ENCODE measurements at regions of chr12 and their contacts with region 1.

Region 1: GRCh38 chr12:51217968-51218606 is at the start of gene POU6F1:
- DNase-seq: peak; percentile 44 to 84 (median 64)
- ATAC-seq: peak; percentile 84 to 87 (median 85)
- H3K4me3 ChIP-seq: peak within 1 kb of the TSS; percentile 88 to 90
- H3K4me3 Mint-ChIP-seq: peak within 1 kb of the TSS; percentile 90 to 92 (median 91)
- H3K27ac ChIP-seq: peak within 1 kb of the TSS; percentile 91
- H3K27ac Mint-ChIP-seq: peak within 1 kb of the TSS; percentile 96 to 97
- H3K4me1 ChIP-seq: peaks cover 5 to 18% of the 10 kb centered on the region in 2 experiments
- H3K4me1 Mint-ChIP-seq: peaks cover 26 to 31% (median 28%) of the 10 kb centered on the region in 3 donors
- H3K27me3 ChIP-seq: no peaks in the 10 kb centered on the region
- H3K27me3 Mint-ChIP-seq: no peaks in the 10 kb centered on the region
- total RNA-seq, gene POU6F1: 29.4 to 61.9 (median 45.4) TPM

Region 2: GRCh38 chr12:50894241-50894640 is 323.8 kb before region 1 on chr12:
- CTCF ChIA-PET with region 1: interaction called in 1 of 2 experiments, 10 read pairs
- POLR2A ChIA-PET with region 1: no interaction called
- DNase-seq: no peak
- ATAC-seq: no peak
- H3K4me3 ChIP-seq: no peak overlapping the region
- H3K4me3 Mint-ChIP-seq: no peak overlapping the region
- H3K27ac ChIP-seq: no peak overlapping the region
- H3K27ac Mint-ChIP-seq: no peak overlapping the region
- H3K4me1 ChIP-seq: no peaks in the 10 kb centered on the region
- H3K4me1 Mint-ChIP-seq: no peaks in the 10 kb centered on the region
- H3K27me3 ChIP-seq: peaks cover 0 to 6% of the 10 kb centered on the region in 2 experiments
- H3K27me3 Mint-ChIP-seq: no peaks in the 10 kb centered on the region

Region 3: DNA sequence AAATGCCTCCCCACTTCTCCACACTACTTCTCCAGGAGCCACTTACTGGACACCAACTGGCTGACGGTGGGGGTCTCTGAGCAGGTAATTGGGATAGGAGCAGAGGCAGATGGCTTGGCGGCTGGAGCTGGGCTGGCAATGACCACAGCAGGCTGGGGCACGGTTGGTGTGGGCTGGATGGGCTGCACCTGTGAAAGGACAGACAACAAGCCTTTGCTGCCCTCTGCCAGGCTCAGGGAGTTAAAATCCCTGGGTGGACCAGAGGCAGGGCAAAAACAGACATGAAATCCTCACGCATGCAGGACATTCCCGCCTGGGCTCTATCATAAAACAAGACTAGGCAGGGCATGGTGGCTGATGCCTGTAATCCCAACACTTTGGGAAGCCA is 25.8 kb before region 1 on chr12:
- CTCF ChIA-PET with region 1: interaction called in 1 of 2 experiments, 10 read pairs
- POLR2A ChIA-PET with region 1: no interaction called
- DNase-seq: no peak
- ATAC-seq: no peak
- H3K4me3 ChIP-seq: no peak overlapping the region
- H3K4me3 Mint-ChIP-seq: no peak overlapping the region
- H3K27ac ChIP-seq: no peak overlapping the region
- H3K27ac Mint-ChIP-seq: no peak overlapping the region
- H3K4me1 ChIP-seq: no peaks in the 10 kb centered on the region
- H3K4me1 Mint-ChIP-seq: peaks cover 0 to under 1% (median 0%) of the 10 kb centered on the region in 3 donors
- H3K27me3 ChIP-seq: no peaks in the 10 kb centered on the region
- H3K27me3 Mint-ChIP-seq: no peaks in the 10 kb centered on the region

Region 4: DNA sequence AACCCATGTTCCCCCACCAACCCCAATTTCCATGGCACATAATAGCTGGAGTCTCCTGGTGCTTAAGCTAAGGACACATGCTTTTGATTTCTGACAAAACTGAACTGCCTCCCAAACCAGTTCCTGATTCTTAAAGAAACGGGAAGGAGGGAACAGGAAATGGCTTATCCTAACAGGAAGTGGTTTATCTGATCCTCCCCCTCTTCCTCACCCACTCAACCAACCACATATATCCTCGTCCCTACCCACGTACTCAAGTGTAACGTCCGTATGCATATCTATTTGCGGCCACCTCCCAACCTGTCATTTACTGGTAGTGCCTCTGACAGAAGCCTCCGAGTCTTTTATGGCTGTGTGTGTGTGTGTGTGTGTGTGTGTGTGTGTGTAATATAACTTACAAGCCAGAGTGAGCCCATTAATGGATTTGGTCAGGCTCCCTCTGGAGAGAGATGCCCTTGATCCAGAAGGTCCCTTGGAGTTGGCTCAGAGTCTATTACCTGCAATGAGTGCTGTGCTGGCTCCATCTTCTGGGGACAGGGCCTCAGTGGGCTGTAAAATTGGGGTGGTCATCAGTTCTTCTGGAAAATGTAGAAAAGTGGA is 28.3 kb after region 1 on chr12:
- CTCF ChIA-PET with region 1: interaction called in 1 of 2 experiments, 12 read pairs
- POLR2A ChIA-PET with region 1: interaction called, 3 to 10 read pairs
- DNase-seq: peak in 29 of 35 experiments; percentile 11 to 68 (median 39)
- ATAC-seq: peak; percentile 56 to 80 (median 60)
- H3K4me3 ChIP-seq: peak overlapping the region in 1 of 2 donors; percentile 47
- H3K4me3 Mint-ChIP-seq: peak overlapping the region in 1 of 3 donors; percentile 29
- H3K27ac ChIP-seq: peak overlapping the region; percentile 80
- H3K27ac Mint-ChIP-seq: peak overlapping the region; percentile 83 to 85
- H3K4me1 ChIP-seq: peaks cover 31 to 46% of the 10 kb centered on the region in 2 experiments
- H3K4me1 Mint-ChIP-seq: peaks cover 56 to 62% (median 61%) of the 10 kb centered on the region in 3 donors
- H3K27me3 ChIP-seq: no peaks in the 10 kb centered on the region
- H3K27me3 Mint-ChIP-seq: no peaks in the 10 kb centered on the region

Region 5: DNA sequence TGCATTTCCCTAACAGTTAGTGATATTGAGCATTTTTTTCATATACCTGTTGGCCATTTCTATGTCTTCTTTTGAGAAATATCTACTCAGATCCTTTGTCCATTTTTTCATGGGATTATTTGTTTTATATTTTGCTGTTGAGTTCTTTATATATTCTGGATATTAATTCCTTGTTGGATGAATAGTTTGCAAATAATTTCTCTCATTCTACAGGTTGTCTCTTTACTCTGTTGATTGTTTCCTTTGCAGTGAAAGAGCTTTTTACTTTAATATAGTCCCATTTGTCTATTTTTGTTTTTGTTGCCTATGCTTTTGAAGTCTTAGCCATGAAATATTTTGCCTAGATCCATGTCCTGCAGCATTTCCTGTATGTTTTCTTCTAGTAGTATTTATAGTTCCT is 195.1 kb after region 1 on chr12:
- CTCF ChIA-PET with region 1: no interaction called
- POLR2A ChIA-PET with region 1: no interaction called
- DNase-seq: no peak
- ATAC-seq: no peak
- H3K4me3 ChIP-seq: no peak overlapping the region
- H3K4me3 Mint-ChIP-seq: no peak overlapping the region
- H3K27ac ChIP-seq: no peak overlapping the region
- H3K27ac Mint-ChIP-seq: no peak overlapping the region
- H3K4me1 ChIP-seq: no peaks in the 10 kb centered on the region
- H3K4me1 Mint-ChIP-seq: peaks cover 0 to 2% (median 0%) of the 10 kb centered on the region in 3 donors
- H3K27me3 ChIP-seq: no peaks in the 10 kb centered on the region
- H3K27me3 Mint-ChIP-seq: no peaks in the 10 kb centered on the region

Measured in T-cell (primary cell).